Activated CD8-positive, alpha-beta memory T cell treated with anti-CD3 and anti-CD28 coated beads, Interleukin-2, amount 10 ng/mL, durations not matched to agents 7 days and 5 days (primary cell): ENCODE measurements at regions of chr5 and their contacts with region 1.

Region 1: DNA sequence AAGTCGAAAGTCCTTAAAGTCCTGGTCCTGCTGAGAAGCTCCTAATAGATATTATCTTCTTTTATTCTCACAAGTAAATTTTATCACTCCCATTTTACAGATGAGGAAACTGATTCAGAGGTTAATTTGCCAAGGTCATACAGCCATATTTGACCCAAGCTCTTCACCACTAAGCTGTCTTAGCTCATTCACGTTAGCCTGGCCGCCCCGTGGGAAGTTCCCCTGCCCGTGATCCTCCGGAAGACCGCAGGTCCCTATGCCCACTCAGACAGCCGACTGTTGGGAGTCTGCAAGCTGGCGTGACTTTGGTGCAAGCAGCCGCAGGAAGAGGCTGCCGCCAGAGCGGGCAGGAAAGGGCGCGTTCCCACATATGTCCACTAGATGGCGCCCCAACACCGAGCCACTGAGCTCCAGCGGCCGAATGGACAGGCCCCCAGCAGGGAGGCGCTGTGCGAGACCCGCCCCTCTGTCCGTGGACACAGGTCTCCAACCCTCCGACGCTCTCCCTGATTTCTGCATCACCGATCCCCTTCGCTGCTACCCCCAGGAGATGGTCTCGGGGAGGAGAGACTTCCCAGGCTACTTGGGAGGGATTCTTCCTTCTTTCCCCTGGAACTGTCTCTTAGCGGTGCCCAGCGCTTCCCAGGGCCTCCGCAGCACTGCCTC is 10.0 kb upstream of the ARAP3 start:
- DNase-seq: peak; percentile 92
- ATAC-seq: peak; percentile 85
- H3K4me3 Mint-ChIP-seq: peak overlapping the region; percentile 76
- H3K27ac Mint-ChIP-seq: peak overlapping the region; percentile 86
- H3K4me1 Mint-ChIP-seq: peaks cover 35% of the 10 kb centered on the region
- H3K27me3 Mint-ChIP-seq: peaks cover 28% of the 10 kb centered on the region

Region 2: DNA sequence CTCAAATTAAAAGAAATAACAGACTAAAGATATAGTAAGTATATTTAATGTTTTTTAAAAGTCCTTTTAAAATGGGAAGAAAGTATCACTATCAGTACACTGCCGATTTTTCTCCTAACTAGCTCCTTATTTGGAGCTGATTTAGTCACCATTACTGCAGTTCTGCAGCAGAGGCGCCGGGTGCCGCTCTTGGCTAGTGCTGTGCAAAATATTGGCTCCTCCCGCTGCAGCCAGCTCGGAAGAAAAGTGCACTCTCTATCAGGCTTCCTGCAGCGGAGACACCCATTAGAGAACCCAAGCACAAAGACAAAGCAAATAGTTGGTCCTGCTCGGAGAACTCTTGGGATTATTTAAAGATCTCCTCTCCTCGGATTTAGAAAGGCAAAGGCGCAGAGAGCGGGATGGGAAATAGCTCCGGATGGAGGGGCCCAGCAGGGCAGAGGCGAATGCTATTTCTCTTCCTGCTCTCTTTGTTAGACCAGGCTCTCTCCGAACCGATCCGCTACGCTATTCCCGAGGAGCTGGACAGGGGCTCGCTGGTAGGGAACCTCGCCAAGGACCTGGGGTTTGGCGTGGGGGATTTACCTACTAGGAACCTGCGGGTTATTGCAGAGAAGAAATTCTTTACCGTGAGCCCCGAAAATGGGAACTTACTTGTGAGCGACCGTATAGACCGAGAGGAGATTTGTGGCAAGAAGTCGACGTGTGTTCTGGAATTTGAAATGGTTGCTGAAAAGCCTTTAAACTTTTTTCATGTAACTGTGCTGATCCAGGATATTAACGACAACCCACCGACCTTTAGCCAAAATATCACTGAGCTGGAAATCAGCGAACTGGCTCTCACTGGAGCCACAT is 321.8 kb before region 1 on chr5 and contains the start of gene PCDHGB3:
- CTCF ChIA-PET with region 1: no interaction called
- DNase-seq: no peak
- ATAC-seq: no peak
- H3K4me3 Mint-ChIP-seq: peak within 1 kb of the TSS; percentile 40
- H3K27ac Mint-ChIP-seq: no peak within 1 kb of the TSS
- H3K4me1 Mint-ChIP-seq: peaks cover 2% of the 10 kb centered on the region
- H3K27me3 Mint-ChIP-seq: peaks cover 71% of the 10 kb centered on the region
- total RNA-seq, gene PCDHGB3: 0.09 to 0.41 TPM

Region 3: GRCh38 chr5:141441571-141442170 is 250.3 kb before region 1 on chr5:
- CTCF ChIA-PET with region 1: no interaction called
- DNase-seq: no peak
- ATAC-seq: no peak
- H3K4me3 Mint-ChIP-seq: no peak overlapping the region
- H3K27ac Mint-ChIP-seq: no peak overlapping the region
- H3K4me1 Mint-ChIP-seq: no peaks in the 10 kb centered on the region
- H3K27me3 Mint-ChIP-seq: peaks cover 5% of the 10 kb centered on the region

Region 4: DNA sequence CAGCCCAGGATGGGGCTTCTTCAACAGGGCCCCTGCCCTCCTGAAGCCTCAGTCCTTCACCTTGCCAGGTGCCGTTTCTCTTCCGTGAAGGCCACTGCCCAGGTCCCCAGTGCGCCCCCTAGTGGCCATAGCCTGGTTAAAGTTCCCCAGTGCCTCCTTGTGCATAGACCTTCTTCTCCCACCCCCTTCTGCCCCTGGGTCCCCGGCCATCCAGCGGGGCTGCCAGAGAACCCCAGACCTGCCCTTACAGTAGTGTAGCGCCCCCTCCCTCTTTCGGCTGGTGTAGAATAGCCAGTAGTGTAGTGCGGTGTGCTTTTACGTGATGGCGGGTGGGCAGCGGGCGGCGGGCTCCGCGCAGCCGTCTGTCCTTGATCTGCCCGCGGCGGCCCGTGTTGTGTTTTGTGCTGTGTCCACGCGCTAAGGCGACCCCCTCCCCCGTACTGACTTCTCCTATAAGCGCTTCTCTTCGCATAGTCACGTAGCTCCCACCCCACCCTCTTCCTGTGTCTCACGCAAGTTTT is 179.6 kb before region 1 on chr5:
- CTCF ChIA-PET with region 1: no interaction called
- DNase-seq: peak; percentile 89
- ATAC-seq: peak; percentile 62
- H3K4me3 Mint-ChIP-seq: peak overlapping the region; percentile 36
- H3K27ac Mint-ChIP-seq: peak overlapping the region; percentile 52
- H3K4me1 Mint-ChIP-seq: peaks cover 24% of the 10 kb centered on the region
- H3K27me3 Mint-ChIP-seq: peaks cover 3% of the 10 kb centered on the region

Region 5: DNA sequence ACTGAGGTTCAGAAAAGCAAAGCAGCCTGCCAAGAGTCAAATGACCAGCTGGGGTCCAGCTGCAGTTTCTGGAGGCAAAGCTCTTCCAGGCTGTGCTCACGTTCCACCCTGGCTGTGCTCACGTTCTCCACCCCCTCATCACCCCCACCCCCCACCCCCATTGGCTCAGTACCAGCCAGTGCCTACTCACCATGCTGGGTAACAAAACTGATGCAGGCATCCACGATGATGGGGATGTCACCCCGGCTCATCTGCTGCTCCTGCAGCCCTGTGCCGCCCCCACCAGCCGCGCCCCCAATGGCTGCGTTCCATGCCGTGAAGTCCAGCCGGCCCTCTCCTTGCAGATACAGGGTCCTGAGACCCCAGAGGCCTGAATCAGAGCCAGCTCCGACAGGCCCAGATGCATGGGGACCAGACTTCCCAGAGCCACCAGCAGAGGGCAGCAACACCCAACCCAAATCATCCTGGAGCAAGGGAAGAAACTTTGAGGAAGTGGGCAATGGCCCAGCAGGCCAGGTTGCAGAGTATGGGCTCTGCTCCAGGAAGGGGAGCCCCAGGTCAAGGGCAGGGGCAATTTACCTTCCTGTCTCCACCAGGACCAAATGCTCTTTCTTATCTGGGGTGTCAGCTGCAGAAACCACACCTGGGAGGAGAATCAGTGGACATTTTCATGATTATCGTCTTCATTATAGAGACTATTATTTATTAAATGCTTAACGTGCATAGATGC is 27.1 kb before region 1 on chr5:
- CTCF ChIA-PET with region 1: interaction called, 39 read pairs
- DNase-seq: peak; percentile 81
- ATAC-seq: peak; percentile 93
- H3K4me3 Mint-ChIP-seq: no peak overlapping the region
- H3K27ac Mint-ChIP-seq: no peak overlapping the region
- H3K4me1 Mint-ChIP-seq: peaks cover 2% of the 10 kb centered on the region
- H3K27me3 Mint-ChIP-seq: no peaks in the 10 kb centered on the region

Region 6: DNA sequence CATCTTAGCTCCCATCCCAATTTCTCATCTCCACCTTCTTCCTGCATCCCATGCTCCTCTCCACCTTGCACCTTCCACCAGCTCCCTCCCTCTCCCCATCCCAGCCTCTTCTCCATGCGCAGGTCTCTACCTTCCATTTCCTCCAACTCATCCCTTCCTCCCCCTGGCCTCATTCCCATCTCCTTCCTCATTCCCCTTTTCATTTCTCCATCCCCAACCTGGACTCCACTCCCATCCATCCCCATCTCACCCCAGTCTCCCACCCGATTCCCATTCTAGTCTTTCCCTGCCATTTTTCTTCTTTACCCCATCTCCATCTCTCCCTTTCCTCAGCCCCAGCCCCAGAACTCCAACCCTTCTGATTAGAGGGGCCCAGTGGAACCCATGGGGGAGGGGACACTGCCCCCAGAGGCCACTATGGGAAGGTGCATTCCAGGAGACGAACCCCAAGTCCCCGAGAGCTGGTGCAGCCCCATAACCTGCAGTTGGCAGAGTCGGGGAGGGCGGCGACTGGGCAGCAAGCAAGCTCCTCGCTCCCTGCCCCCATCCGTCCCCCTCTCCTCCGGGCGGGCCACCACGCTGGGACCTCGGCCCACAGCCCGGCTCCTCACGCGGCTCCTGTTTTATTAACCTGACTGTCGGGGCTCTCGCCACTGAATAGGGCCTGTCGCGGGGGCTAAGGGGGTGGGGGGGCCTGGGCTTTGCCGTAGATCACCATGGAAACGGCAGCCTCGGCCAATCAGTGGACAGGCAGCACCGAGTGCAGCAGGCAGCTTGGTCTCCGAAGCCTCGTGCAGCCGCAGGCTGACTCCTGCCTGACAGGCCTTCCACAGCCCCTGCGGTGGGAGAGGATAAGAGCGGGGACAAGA is 119.5 kb after region 1 on chr5:
- CTCF ChIA-PET with region 1: interaction called, 74 read pairs
- DNase-seq: peak; percentile 49
- ATAC-seq: peak; percentile 75
- H3K4me3 Mint-ChIP-seq: no peak overlapping the region
- H3K27ac Mint-ChIP-seq: no peak overlapping the region
- H3K4me1 Mint-ChIP-seq: peaks cover 5% of the 10 kb centered on the region
- H3K27me3 Mint-ChIP-seq: peaks cover 64% of the 10 kb centered on the region

Region 7: DNA sequence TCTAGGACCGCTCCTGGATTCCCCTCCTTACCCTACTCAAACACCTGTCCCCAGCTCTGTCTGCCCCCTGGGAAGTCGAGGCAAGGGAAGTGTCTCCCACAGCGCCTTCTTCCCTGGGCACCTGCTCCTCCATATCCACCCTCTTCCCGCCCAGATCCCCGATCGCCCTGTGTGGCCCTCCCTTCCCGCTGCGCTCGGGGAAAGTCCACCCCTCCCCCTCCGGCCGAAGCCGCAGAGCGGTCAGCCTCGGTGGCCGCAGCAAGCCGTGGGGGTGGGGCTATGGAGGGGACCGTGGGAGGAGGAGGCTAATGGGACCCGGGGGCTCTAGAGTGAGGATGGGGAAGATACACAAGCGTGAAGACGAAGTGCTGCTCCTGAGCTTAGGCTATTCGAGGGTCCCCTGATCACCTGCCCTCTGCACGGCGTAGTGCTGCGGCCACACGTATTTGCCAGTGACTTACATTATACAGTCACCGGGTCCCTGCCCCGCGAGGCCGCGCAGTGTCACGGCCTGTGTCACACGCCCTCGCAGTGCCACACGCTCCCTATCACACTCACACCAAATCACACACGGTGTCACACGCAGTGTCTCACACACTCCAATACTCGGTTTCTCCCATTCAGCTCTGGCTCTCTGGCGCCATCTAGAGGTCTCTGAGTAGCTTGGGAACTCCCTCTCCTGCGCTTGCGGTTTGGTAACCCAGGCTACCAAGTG is 186.9 kb after region 1 on chr5:
- CTCF ChIA-PET with region 1: interaction called, 333 read pairs
- DNase-seq: peak; percentile 91
- ATAC-seq: peak; percentile 88
- H3K4me3 Mint-ChIP-seq: peak overlapping the region; percentile 38
- H3K27ac Mint-ChIP-seq: peak overlapping the region; percentile 8
- H3K4me1 Mint-ChIP-seq: peaks cover 22% of the 10 kb centered on the region
- H3K27me3 Mint-ChIP-seq: peaks cover 88% of the 10 kb centered on the region

Region 8: GRCh38 chr5:141960449-141961202 is 268.6 kb after region 1 on chr5:
- CTCF ChIA-PET with region 1: interaction called, 195 read pairs
- DNase-seq: peak; percentile 94
- ATAC-seq: peak; percentile 96
- H3K4me3 Mint-ChIP-seq: peak overlapping the region; percentile 29
- H3K27ac Mint-ChIP-seq: peak overlapping the region; percentile 79
- H3K4me1 Mint-ChIP-seq: peaks cover 45% of the 10 kb centered on the region
- H3K27me3 Mint-ChIP-seq: no peaks in the 10 kb centered on the region

Region 9: DNA sequence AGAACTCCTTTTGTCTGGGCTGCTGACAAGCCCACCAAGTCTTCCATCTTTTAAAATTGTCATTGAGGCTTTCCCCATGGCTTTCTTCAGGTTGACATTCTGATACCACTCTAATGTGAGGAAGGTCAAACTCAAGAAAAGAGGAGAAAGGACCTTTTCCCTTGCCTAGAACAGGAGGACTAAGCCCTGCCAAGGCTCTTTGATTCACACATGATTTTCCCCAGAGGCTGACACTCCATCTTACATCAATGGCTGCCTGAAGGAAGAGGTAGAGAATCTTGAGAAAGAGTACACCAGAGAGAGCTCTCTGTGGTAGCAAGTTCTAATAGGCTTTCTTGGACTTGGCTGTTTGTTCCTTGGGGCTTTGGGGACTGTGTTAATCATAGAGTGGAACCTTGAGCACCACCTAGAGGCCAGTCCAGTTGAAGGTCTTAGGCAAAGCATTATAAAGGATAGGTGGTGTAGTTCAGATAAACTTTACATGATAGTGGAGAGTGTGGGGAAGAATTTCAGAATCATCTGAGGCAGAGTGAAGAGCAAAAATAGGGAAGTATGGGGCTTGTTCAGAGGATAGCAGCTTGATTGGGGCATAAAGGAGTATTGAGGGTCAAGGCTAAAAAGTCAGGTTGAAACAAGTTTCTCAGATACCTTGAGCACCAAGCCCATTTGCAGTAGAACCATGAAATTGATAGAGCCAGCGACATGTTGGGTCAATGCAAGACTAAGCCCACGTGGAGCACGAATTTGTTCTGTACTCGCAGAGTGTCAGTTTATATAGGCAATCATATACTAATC is 453.3 kb after region 1 on chr5:
- CTCF ChIA-PET with region 1: interaction called, 19 read pairs
- DNase-seq: peak; percentile 75
- ATAC-seq: peak; percentile 89
- H3K4me3 Mint-ChIP-seq: no peak overlapping the region
- H3K27ac Mint-ChIP-seq: no peak overlapping the region
- H3K4me1 Mint-ChIP-seq: no peaks in the 10 kb centered on the region
- H3K27me3 Mint-ChIP-seq: no peaks in the 10 kb centered on the region